ENCODE measurements at regions of chr19 and their contacts with region 1.

Region 1: DNA sequence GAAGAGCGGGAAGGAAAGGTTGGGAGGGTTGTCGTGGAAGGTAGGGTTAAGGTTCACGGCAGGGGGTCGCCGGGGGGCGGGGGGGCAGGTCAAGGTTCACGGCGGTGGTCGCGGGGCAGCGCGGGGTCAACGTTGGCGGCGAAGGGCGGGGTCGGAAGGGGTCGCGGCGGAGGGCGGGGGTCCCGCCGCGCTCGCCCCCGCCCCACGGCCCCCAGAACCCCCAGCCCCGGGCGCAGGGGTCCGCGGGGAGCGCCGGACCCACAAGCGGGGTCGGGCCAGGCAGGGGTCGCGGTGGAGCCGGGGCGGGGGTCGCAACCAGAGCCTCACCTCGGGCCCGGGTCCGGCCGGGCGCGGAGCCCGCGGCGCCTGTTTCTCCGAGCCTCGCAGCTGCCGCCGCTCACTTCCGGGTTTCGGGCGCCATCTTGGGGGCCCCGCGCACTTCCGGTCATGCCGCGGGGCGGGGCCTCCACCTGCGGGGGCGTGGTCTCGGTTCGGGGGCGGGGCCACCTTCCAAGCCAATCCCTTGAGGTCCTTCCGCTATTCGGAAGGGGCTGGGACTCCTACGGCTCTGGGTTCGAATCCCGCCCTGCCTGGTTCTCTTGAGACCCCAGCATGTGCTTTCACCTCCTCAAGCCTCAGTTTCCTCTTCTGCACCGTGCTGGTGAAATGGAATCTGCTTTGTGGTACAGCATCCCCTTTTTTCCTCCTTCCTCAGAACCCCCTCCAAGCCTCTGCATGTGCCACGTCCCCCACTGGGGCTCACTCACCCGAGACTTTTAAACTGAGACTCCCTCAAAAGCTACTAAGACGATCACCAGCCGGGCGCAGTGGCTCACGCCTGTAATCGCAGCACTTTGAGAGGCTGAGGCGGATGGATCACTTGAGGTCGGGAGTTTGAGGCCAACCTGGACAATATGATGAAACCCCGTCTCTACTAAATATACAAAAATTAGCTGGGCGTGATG is at the start of gene SBNO2:
- DNase-seq: peak; percentile 81
- H3K4me3 ChIP-seq: peak within 1 kb of the TSS; percentile 79 to 82 (median 79)
- H3K27ac ChIP-seq: peak within 1 kb of the TSS; percentile 71
- H3K4me1 ChIP-seq: peaks cover 53% of the 10 kb centered on the region
- H3K27me3 ChIP-seq: no peaks in the 10 kb centered on the region
- CTCF ChIP-seq: no peak
- total RNA-seq, gene SBNO2: 37.0 to 108 TPM

Region 2: GRCh38 chr19:860481-861101 is 313.5 kb before region 1 on chr19:
- CTCF ChIA-PET with region 1: no interaction called
- dilution Hi-C with region 1: no loop called
- in situ Hi-C with region 1: no loop called
- intact Hi-C with region 1: no loop called
- DNase-seq: peak; percentile 61
- H3K4me3 ChIP-seq: peak overlapping the region in 1 of 3 experiments; percentile 20
- H3K27ac ChIP-seq: no peak overlapping the region
- H3K4me1 ChIP-seq: peaks cover 4% of the 10 kb centered on the region
- H3K27me3 ChIP-seq: no peaks in the 10 kb centered on the region
- CTCF ChIP-seq: no peak

Region 3: DNA sequence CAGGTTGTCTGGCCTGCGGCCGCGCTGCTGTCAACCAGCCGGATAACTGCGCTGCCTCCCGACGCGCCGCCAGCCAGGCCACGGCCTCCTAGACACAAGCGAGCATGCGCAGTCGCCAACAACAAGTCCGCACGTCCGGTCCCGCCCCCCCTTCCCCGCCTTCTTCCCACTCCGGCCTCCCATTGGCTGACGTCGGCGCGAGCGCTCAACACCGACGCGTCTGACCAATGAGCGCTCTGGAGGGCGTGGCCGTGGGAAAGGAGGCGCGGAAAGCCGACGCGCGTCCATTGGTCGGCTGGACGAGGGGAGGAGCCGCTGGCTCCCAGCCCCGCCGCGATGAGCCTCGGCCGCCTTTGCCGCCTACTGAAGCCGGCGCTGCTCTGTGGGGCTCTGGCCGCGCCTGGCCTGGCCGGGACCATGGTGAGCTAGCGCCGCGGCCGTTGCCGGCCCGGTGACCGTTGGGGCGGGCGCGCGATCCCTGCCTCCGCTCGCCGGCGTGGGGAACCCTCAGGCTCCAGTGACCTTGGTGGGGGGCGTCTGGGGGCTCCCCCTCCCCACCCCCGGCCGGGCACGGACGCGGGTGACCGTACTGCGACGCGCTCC is 70.3 kb before region 1 on chr19 and contains the start of gene GPX4:
- CTCF ChIA-PET with region 1: no interaction called
- dilution Hi-C with region 1: no loop called
- in situ Hi-C with region 1: no loop called
- intact Hi-C with region 1: loop called (anchors 2 kb)
- DNase-seq: peak; percentile 99
- H3K4me3 ChIP-seq: peak within 1 kb of the TSS; percentile 71 to 75 (median 74)
- H3K27ac ChIP-seq: peak within 1 kb of the TSS; percentile 79
- H3K4me1 ChIP-seq: peaks cover 47% of the 10 kb centered on the region
- H3K27me3 ChIP-seq: no peaks in the 10 kb centered on the region
- CTCF ChIP-seq: no peak
- total RNA-seq, gene GPX4: 154 to 216 TPM

Region 4: GRCh38 chr19:1131738-1132551 is 42.2 kb before region 1 on chr19:
- CTCF ChIA-PET with region 1: no interaction called
- dilution Hi-C with region 1: no loop called
- in situ Hi-C with region 1: no loop called
- intact Hi-C with region 1: loop called (anchors 5 kb)
- DNase-seq: peak; percentile 83
- H3K4me3 ChIP-seq: peak overlapping the region; percentile 58 to 74 (median 58)
- H3K27ac ChIP-seq: peak overlapping the region; percentile 70
- H3K4me1 ChIP-seq: peaks cover 45% of the 10 kb centered on the region
- H3K27me3 ChIP-seq: no peaks in the 10 kb centered on the region
- CTCF ChIP-seq: no peak

Measured in mammary epithelial cell (primary cell).